Naive thymus-derived CD4-positive, alpha-beta T cell (primary cell): ENCODE measurements at regions of chr3 and their contacts with region 1.

Region 1: GRCh38 chr3:111539351-111540331 is 2.4 kb upstream of the CD96 start:
- DNase-seq: peak; percentile 32 to 69 (median 57)
- ATAC-seq: peak; percentile 54
- H3K4me3 ChIP-seq: peak overlapping the region; percentile 40
- H3K4me3 Mint-ChIP-seq: peak overlapping the region; percentile 77 to 92 (median 82)
- H3K27ac ChIP-seq: peak overlapping the region; percentile 42
- H3K27ac Mint-ChIP-seq: peak overlapping the region in 5 of 9 donors; percentile 78 to 99 (median 98)
- H3K4me1 ChIP-seq: peaks cover 33 to 38% of the 10 kb centered on the region in 2 donors
- H3K4me1 Mint-ChIP-seq: peaks cover 27 to 65% (median 55%) of the 10 kb centered on the region in 7 donors
- H3K27me3 ChIP-seq: no peaks in the 10 kb centered on the region
- H3K27me3 Mint-ChIP-seq: no peaks in the 10 kb centered on the region

Region 2: DNA sequence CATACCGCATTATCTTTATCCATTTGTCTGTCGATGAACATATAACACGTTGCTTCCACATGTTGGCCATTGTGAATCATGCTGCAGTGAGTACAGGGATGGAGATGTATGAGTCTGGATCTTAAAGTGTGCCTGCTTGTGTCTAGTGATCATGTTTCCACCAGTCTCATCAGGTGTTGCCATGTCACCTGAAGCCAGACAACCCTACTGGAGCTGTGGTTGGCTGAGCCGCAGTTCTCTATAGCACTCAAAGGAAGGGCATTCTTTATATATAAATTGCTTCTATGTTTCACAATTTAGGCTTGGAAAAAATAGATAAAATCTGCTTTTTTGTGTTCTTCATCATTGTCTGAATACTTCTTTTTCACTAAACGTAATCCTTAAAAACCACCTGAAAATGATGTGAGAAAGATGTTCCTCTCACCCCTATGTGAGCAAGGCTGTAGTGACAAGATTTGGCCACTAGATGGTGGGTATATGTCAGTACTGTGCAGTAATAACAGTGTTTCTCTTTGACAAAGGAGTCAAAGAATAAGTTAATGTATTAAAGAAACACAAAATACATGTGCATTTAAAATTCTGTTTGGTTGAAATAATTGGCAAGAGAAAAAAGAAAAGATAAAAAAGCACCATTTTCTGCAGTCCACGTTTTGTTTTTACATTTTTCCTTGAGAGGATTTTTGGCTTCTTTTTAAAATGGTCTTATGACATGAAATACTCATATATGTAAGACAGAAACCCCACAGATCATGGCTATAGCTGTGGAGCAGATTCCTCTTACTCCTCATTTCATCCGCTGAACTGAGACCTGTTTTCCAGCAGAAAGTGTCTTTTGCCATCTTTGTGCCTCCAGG is 1807.8 kb before region 1 on chr3:
- CTCF ChIA-PET with region 1: interaction called, 3 read pairs
- POLR2A ChIA-PET with region 1: no interaction called
- intact Hi-C with region 1: loop called (anchors 1 kb)
- DNase-seq: peak; percentile 11 to 68 (median 55)
- ATAC-seq: peak; percentile 87
- H3K4me3 ChIP-seq: no peak overlapping the region
- H3K4me3 Mint-ChIP-seq: no peak overlapping the region
- H3K27ac ChIP-seq: no peak overlapping the region
- H3K27ac Mint-ChIP-seq: no peak overlapping the region
- H3K4me1 ChIP-seq: no peaks in the 10 kb centered on the region
- H3K4me1 Mint-ChIP-seq: peaks cover 0 to 12% (median 4%) of the 10 kb centered on the region in 7 donors
- H3K27me3 ChIP-seq: no peaks in the 10 kb centered on the region
- H3K27me3 Mint-ChIP-seq: no peaks in the 10 kb centered on the region

Region 3: GRCh38 chr3:110799271-110799670 is 740.4 kb before region 1 on chr3:
- CTCF ChIA-PET with region 1: no interaction called
- POLR2A ChIA-PET with region 1: no interaction called
- intact Hi-C with region 1: loop called in 1 of 2 experiments (anchors 10 kb)
- DNase-seq: no peak
- ATAC-seq: no peak
- H3K4me3 ChIP-seq: no peak overlapping the region
- H3K4me3 Mint-ChIP-seq: no peak overlapping the region
- H3K27ac ChIP-seq: no peak overlapping the region
- H3K27ac Mint-ChIP-seq: no peak overlapping the region
- H3K4me1 ChIP-seq: no peaks in the 10 kb centered on the region
- H3K4me1 Mint-ChIP-seq: no peaks in the 10 kb centered on the region
- H3K27me3 ChIP-seq: no peaks in the 10 kb centered on the region
- H3K27me3 Mint-ChIP-seq: peaks cover 0 to 10% (median 5%) of the 10 kb centered on the region in 5 donors

Region 4: GRCh38 chr3:111277226-111277625 is 262.4 kb before region 1 on chr3:
- CTCF ChIA-PET with region 1: no interaction called
- POLR2A ChIA-PET with region 1: no interaction called
- intact Hi-C with region 1: loop called in 1 of 2 experiments (anchors 1 kb)
- DNase-seq: peak in 2 of 9 donors; percentile 4 to 23
- ATAC-seq: no peak
- H3K4me3 ChIP-seq: no peak overlapping the region
- H3K4me3 Mint-ChIP-seq: no peak overlapping the region
- H3K27ac ChIP-seq: no peak overlapping the region
- H3K27ac Mint-ChIP-seq: peak overlapping the region in 1 of 9 donors; percentile 59
- H3K4me1 ChIP-seq: no peaks in the 10 kb centered on the region
- H3K4me1 Mint-ChIP-seq: peaks cover 6 to 33% (median 24%) of the 10 kb centered on the region in 7 donors
- H3K27me3 ChIP-seq: no peaks in the 10 kb centered on the region
- H3K27me3 Mint-ChIP-seq: peaks cover 0 to 8% (median 4%) of the 10 kb centered on the region in 5 donors

Region 5: DNA sequence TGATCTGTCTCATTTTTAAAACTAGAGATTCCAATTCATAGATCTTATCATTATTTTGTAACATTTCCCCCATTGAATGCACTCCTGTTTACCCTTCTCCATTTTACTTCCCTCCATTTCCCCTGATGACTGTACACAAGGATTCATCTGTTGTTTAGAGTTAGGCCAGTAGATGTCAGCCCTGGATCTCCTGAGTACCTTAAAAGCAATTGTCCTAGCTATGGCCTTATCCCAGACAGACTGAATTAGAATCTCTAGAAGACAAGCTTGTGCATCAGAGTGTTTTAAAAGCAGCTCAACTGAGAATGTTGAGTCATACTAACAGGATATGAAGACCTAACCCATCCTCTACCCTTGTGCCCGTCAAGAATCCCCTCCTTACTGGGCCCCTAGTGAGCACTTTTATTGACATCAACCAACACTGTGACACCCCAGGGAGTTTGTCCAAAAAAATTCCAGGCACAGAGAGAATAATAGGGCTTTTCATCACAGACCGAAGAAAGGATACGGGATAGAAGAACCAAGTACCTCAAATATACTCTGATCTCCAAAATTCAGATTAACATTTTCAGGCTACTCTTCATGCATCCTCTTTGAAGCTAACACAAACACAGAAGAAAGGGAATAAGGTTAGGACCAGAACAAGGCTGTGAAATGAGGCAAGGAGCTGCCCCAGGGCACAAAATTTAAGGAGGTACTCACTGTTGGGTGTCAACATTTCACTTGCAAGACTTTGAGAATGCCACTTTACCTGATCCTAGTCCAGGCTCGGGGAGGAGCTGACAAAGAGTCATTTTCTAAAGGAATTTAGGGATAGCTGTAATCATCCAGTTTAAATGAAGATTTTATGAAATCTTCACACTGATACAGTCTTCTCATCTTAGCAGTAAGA is 38.4 kb after region 1 on chr3:
- CTCF ChIA-PET with region 1: no interaction called
- POLR2A ChIA-PET with region 1: interaction called, 4 read pairs
- intact Hi-C with region 1: loop called (anchors 5 kb)
- DNase-seq: peak in 1 of 9 donors; percentile 7
- ATAC-seq: peak; percentile 71
- H3K4me3 ChIP-seq: no peak overlapping the region
- H3K4me3 Mint-ChIP-seq: peak overlapping the region in 1 of 10 donors; percentile 13
- H3K27ac ChIP-seq: no peak overlapping the region
- H3K27ac Mint-ChIP-seq: peak overlapping the region in 8 of 9 donors; percentile 27 to 83 (median 60)
- H3K4me1 ChIP-seq: no peaks in the 10 kb centered on the region
- H3K4me1 Mint-ChIP-seq: peaks cover 18 to 72% (median 61%) of the 10 kb centered on the region in 7 donors
- H3K27me3 ChIP-seq: no peaks in the 10 kb centered on the region
- H3K27me3 Mint-ChIP-seq: no peaks in the 10 kb centered on the region

Region 6: DNA sequence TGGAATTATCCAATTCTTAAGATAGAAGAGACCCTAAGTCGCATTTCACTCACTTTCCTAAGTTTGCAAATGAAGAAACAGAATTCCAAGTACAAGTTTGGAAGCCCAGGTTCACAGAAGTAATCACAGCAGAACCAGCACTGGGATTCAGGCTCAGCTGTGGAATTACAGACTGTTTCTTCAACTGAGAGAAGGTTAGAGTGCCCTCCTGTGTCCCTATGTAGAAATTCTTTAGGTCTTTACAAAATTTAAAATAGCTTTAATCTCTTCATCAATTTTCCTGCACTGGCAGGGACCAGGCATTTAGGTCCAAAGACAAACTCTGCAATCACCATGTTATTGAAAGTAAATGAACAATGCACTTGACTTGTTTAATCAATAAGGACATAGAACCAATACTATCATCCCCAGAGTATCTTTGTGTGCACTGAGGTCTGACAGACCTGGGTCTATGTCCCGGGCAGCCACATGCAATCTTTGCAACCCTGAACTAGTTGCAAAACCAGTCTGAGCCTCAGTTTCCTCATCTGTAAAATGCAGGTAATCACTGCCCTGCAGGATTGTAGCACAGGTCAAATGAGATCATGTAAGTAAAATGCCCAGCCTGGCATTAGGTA is 151.8 kb after region 1 on chr3:
- CTCF ChIA-PET with region 1: no interaction called
- POLR2A ChIA-PET with region 1: interaction called, 4 read pairs
- intact Hi-C with region 1: loop called in 1 of 2 experiments (anchors 1 kb)
- DNase-seq: peak in 6 of 9 donors; percentile 17 to 46 (median 36)
- ATAC-seq: peak; percentile 64
- H3K4me3 ChIP-seq: no peak overlapping the region
- H3K4me3 Mint-ChIP-seq: no peak overlapping the region
- H3K27ac ChIP-seq: no peak overlapping the region
- H3K27ac Mint-ChIP-seq: peak overlapping the region in 2 of 9 donors; percentile 38 to 62
- H3K4me1 ChIP-seq: peaks cover 5 to 12% of the 10 kb centered on the region in 2 donors
- H3K4me1 Mint-ChIP-seq: peaks cover 5 to 66% (median 58%) of the 10 kb centered on the region in 7 donors
- H3K27me3 ChIP-seq: no peaks in the 10 kb centered on the region
- H3K27me3 Mint-ChIP-seq: no peaks in the 10 kb centered on the region

Region 7: GRCh38 chr3:112498914-112499711 is 959.5 kb after region 1 on chr3 and contains the start of gene BTLA:
- CTCF ChIA-PET with region 1: no interaction called
- POLR2A ChIA-PET with region 1: no interaction called
- intact Hi-C with region 1: loop called in 1 of 2 experiments (anchors 10 kb)
- DNase-seq: peak in 7 of 9 donors; percentile 45 to 65 (median 50)
- ATAC-seq: peak; percentile 81
- H3K4me3 ChIP-seq: peak within 1 kb of the TSS; percentile 80
- H3K4me3 Mint-ChIP-seq: peak within 1 kb of the TSS; percentile 85 to 100 (median 97)
- H3K27ac ChIP-seq: peak within 1 kb of the TSS; percentile 68
- H3K27ac Mint-ChIP-seq: peak within 1 kb of the TSS; percentile 88 to 99 (median 94)
- H3K4me1 ChIP-seq: peaks cover 14 to 26% of the 10 kb centered on the region in 2 donors
- H3K4me1 Mint-ChIP-seq: peaks cover 34 to 63% (median 55%) of the 10 kb centered on the region in 7 donors
- H3K27me3 ChIP-seq: no peaks in the 10 kb centered on the region
- H3K27me3 Mint-ChIP-seq: no peaks in the 10 kb centered on the region
- total RNA-seq, gene BTLA: 15.6 to 29.5 (median 26.1) TPM